PC-3 (cell line): ENCODE measurements at regions of chr2 and their contacts with region 1.

Region 1: DNA sequence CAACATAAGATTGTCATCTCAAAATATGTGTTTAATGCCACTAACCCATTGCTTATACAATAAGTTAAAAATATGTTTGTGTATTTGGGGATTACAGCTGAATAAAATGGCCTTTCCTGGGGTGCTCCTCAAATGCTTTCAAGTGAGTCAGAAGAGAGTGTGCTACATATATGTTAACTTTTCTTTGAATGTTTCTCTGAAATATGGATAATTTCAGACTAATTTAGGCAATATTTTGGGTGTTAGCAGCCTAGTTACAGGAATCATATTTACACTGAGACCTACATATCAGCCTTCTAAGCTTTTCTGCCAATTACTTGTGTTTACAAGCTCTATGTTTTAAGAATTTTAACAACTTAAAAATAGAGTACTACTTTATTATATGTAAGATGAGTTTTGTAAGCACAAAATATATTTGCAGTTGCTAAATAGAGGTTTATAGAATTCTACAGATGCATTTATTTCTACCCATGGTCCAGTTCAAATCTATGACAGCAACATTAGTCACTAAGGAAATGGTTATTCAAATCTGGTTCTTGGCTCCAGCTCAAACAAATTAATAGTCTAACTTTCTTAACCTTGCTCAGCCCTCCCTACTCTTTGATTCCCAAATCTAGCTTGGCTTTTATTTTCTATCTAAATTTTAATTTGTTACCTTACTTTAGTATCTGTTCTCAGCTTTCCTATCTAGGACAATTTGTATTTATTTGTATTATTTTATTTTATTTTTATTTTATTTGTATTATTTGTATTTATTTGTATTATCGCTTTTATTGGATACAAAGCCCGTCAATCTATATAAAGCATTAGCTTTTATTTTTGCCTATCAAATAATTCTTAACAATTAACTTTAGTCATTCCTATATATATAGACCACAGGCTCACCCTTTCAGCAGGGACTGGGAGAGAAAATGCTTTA is 48.9 kb downstream of the FSIP2 start:
- DNase-seq: peak; percentile 90
- ATAC-seq: peak; percentile 84
- H3K4me3 ChIP-seq: no peak overlapping the region
- H3K27ac ChIP-seq: peak overlapping the region; percentile 77
- H3K4me1 ChIP-seq: peaks cover 26% of the 10 kb centered on the region
- H3K27me3 ChIP-seq: no peaks in the 10 kb centered on the region
- CTCF ChIP-seq: no peak

Region 2: GRCh38 chr2:185676317-185676716 is 111.2 kb before region 1 on chr2:
- CTCF ChIA-PET with region 1: no interaction called
- POLR2A ChIA-PET with region 1: no interaction called
- intact Hi-C with region 1: no loop called
- DNase-seq: peak; percentile 51
- ATAC-seq: peak; percentile 72
- H3K4me3 ChIP-seq: no peak overlapping the region
- H3K27ac ChIP-seq: no peak overlapping the region
- H3K4me1 ChIP-seq: no peaks in the 10 kb centered on the region
- H3K27me3 ChIP-seq: no peaks in the 10 kb centered on the region
- CTCF ChIP-seq: 0 out of 2 replicates have a peak, but pooled peaks have one; percentile 18

Region 3: GRCh38 chr2:185813682-185814081 is 26.2 kb after region 1 on chr2:
- CTCF ChIA-PET with region 1: no interaction called
- POLR2A ChIA-PET with region 1: no interaction called
- intact Hi-C with region 1: loop called (anchors 1 kb)
- DNase-seq: peak; percentile 64
- ATAC-seq: peak; percentile 95
- H3K4me3 ChIP-seq: no peak overlapping the region
- H3K27ac ChIP-seq: no peak overlapping the region
- H3K4me1 ChIP-seq: 0 out of 2 replicates have a peak, but pooled peaks cover 4% of the 10 kb centered on the region
- H3K27me3 ChIP-seq: no peaks in the 10 kb centered on the region
- CTCF ChIP-seq: no peak

Region 4: DNA sequence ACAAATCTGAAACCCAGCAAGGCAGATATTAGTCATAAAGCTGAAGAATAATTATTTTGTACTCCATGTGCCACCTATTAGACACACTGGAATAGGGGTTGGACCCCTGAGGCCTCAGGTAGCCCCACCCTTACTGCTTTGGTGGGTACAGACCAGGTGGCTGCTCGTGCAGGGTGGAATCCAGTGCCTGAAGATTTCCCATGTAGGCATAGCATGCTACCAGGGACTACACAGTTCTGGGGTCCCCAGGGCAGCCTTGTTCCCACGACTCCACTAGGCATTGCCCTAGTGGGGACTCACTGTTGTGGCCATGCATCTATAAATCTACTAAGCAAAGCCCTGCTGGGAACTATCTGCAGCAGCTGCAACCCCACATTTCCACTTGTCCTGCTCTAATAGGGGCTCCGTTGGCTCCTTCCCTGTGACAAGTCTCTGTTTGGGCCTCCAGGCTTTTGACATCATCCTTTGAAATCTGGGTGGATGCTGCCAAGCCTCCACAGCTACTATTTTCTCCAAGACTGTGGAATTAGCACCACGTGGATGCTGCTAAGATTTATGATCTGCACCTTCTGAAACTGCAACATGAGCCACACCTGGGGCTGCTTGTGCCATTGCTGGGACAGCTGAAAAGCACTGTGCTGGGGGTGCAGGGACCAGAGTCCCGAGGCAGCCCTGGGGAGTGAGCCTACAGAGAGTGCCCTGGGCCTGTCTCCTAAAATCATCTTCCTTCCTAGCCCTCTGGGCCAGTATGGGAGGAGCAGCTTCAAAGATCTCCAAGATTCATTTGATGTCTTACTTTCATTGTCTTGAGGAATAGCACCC is 254.9 kb after region 1 on chr2:
- CTCF ChIA-PET with region 1: no interaction called
- POLR2A ChIA-PET with region 1: no interaction called
- intact Hi-C with region 1: no loop called
- DNase-seq: no peak
- ATAC-seq: no peak
- H3K4me3 ChIP-seq: no peak overlapping the region
- H3K27ac ChIP-seq: no peak overlapping the region
- H3K4me1 ChIP-seq: no peaks in the 10 kb centered on the region
- H3K27me3 ChIP-seq: no peaks in the 10 kb centered on the region
- CTCF ChIP-seq: no peak